ENCODE measurements at regions of chr1 and their contacts with region 1.

Region 1: GRCh38 chr1:229270547-229271447 is at the start of gene RAB4A:
- DNase-seq: peak; percentile 93
- total RNA-seq, gene RAB4A: 124 TPM

Region 2: GRCh38 chr1:229183588-229183987 is 87.2 kb before region 1 on chr1:
- intact Hi-C with region 1: no loop called
- DNase-seq: no peak

Region 3: DNA sequence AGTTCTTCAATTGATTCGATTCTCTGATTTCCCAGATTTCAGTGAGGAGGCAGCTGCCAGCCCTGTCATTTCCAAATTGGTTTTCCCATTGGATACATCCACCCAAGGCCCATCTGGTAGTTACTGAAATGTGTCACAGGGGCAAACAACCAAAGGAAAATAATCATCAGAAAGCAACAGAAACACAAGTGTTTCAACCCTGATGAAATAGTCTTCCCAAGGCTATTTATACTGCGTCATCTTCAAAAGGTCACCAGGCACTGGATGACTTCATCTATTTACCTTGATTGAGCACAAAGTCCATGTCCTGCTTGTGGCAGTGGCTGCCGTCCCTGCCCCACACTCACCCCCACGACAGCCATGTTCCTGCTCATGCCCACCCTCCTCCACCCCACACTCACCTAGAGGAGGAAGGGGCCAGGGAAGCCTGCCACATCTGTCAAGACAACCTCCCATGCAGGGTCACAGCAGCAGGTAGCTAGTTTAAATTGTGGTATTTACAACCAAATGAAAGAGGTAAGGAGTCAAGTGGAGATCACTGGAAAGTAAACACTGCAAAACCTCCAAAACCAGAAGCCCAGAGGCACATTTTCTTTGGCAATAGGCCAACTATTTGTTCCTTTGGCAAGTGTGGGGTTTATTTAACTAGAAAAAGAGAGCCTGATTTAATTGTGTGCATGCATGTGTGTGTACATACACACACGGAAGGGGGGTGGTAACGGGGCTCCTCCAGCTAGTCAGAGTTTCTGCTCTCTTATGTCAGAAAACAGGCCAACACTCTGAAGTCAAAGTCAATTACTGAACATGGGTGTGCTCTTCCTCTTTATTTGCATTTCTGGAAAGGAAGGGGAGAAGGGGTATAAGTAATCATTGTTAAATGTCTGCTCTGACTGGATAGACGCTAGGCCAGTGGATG is 49.4 kb before region 1 on chr1:
- intact Hi-C with region 1: no loop called
- DNase-seq: no peak

Region 4: GRCh38 chr1:229341774-229342655 is 71.2 kb after region 1 on chr1:
- intact Hi-C with region 1: loop called (anchors 5 kb)
- DNase-seq: peak; percentile 95

Region 5: GRCh38 chr1:229485318-229485717 is 214.5 kb after region 1 on chr1:
- intact Hi-C with region 1: no loop called
- DNase-seq: no peak

Region 6: GRCh38 chr1:229507951-229508822 is 237.4 kb after region 1 on chr1 and contains the start of gene NUP133:
- intact Hi-C with region 1: loop called (anchors 5 kb)
- DNase-seq: peak; percentile 100
- total RNA-seq, gene NUP133: 24.5 TPM

Measured in cardiac septum (tissue), 1 donor.